K562 (cell line): ENCODE measurements at regions of chr1 and their contacts with region 1.

Region 1: DNA sequence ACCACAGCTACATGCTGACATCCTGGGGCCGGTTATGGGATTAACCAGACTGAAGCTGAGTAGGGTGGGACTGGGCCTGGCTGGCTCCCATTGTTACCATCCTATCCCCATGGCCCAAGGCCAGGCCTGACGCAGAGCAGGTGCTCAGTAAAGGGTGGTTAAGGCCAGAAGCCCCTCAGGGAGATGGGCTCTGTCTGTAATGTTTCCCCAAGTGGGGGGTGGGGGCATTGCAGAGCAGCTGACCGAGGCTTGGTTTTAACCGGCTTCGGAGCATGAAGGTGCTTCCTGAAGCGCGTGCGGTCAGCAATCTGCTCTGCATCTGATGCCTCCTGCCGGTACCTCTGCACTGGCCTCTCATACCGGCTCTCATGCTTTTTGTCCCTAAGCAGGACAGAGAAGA is 83.4 kb upstream of the ACTL8 start:
- DNase-seq: peak in 2 of 4 experiments; percentile 32 to 36
- ATAC-seq: peak; percentile 47
- H3K4me3 ChIP-seq: no peak overlapping the region
- H3K27ac ChIP-seq: no peak overlapping the region
- H3K4me1 ChIP-seq: peaks cover 0 to 4% of the 10 kb centered on the region in 2 experiments; a peak in 1 of 5 replicates
- H3K27me3 ChIP-seq: peaks cover 17 to 63% of the 10 kb centered on the region in 2 experiments
- CTCF ChIP-seq: no peak
- EP300 ChIP-seq: no peak
- POLR2A ChIP-seq: no peak
- RAD21 ChIP-seq: no peak

Region 2: GRCh38 chr1:17648457-17649145 is 23.1 kb before region 1 on chr1:
- CTCF ChIA-PET with region 1: no interaction called
- POLR2A ChIA-PET with region 1: no interaction called
- in situ Hi-C with region 1: no loop called
- intact Hi-C with region 1: no loop called
- DNase-seq: no peak
- ATAC-seq: no peak
- H3K4me3 ChIP-seq: no peak overlapping the region
- H3K27ac ChIP-seq: no peak overlapping the region
- H3K4me1 ChIP-seq: 0 out of 5 replicates have a peak, but pooled peaks cover 0 to 6% of the 10 kb centered on the region in 2 experiments
- H3K27me3 ChIP-seq: peaks cover 34 to 69% of the 10 kb centered on the region in 2 experiments
- CTCF ChIP-seq: no peak
- EP300 ChIP-seq: no peak
- POLR2A ChIP-seq: no peak
- RAD21 ChIP-seq: no peak

Region 3: GRCh38 chr1:17692645-17693044 is 20.9 kb after region 1 on chr1:
- CTCF ChIA-PET with region 1: no interaction called
- POLR2A ChIA-PET with region 1: no interaction called
- in situ Hi-C with region 1: no loop called
- intact Hi-C with region 1: no loop called
- DNase-seq: no peak
- ATAC-seq: no peak
- H3K4me3 ChIP-seq: no peak overlapping the region
- H3K27ac ChIP-seq: no peak overlapping the region
- H3K4me1 ChIP-seq: peaks cover 0 to 6% of the 10 kb centered on the region in 2 experiments; a peak in 2 of 5 replicates
- H3K27me3 ChIP-seq: peaks cover 4 to 60% of the 10 kb centered on the region in 2 experiments; a peak in 2 of 5 replicates
- CTCF ChIP-seq: no peak
- EP300 ChIP-seq: no peak
- POLR2A ChIP-seq: no peak
- RAD21 ChIP-seq: no peak

Region 4: GRCh38 chr1:17732475-17732874 is 60.7 kb after region 1 on chr1:
- CTCF ChIA-PET with region 1: no interaction called
- POLR2A ChIA-PET with region 1: no interaction called
- in situ Hi-C with region 1: no loop called
- intact Hi-C with region 1: no loop called
- DNase-seq: no peak
- ATAC-seq: no peak
- H3K4me3 ChIP-seq: no peak overlapping the region
- H3K27ac ChIP-seq: no peak overlapping the region
- H3K4me1 ChIP-seq: no peaks in the 10 kb centered on the region
- H3K27me3 ChIP-seq: peaks cover 22 to 46% of the 10 kb centered on the region in 2 experiments
- CTCF ChIP-seq: no peak
- EP300 ChIP-seq: no peak
- POLR2A ChIP-seq: no peak
- RAD21 ChIP-seq: no peak

Region 5: GRCh38 chr1:18229625-18230024 is 557.9 kb after region 1 on chr1:
- CTCF ChIA-PET with region 1: no interaction called
- POLR2A ChIA-PET with region 1: no interaction called
- in situ Hi-C with region 1: loop called (anchors 10 kb)
- intact Hi-C with region 1: no loop called
- DNase-seq: no peak
- ATAC-seq: no peak
- H3K4me3 ChIP-seq: no peak overlapping the region
- H3K27ac ChIP-seq: no peak overlapping the region
- H3K4me1 ChIP-seq: no peaks in the 10 kb centered on the region
- H3K27me3 ChIP-seq: no peaks in the 10 kb centered on the region; a peak in 1 of 5 replicates
- CTCF ChIP-seq: no peak
- EP300 ChIP-seq: no peak
- POLR2A ChIP-seq: no peak
- RAD21 ChIP-seq: no peak